Activated naive CD8-positive, alpha-beta T cell treated with anti-CD3 and anti-CD28 coated beads, Interleukin-2, amount 10 ng/mL, durations not matched to agents 7 days and 5 days (primary cell): ENCODE measurements at regions of chr13 and their contacts with region 1.

Region 1: GRCh38 chr13:30395192-30396084 is 26.9 kb upstream of the UBE2L5 start:
- DNase-seq: peak; percentile 58
- ATAC-seq: peak; percentile 68
- H3K4me3 Mint-ChIP-seq: peak overlapping the region; percentile 88
- H3K27ac Mint-ChIP-seq: peak overlapping the region; percentile 99
- H3K4me1 Mint-ChIP-seq: peaks cover 29% of the 10 kb centered on the region
- H3K27me3 Mint-ChIP-seq: no peaks in the 10 kb centered on the region

Region 2: DNA sequence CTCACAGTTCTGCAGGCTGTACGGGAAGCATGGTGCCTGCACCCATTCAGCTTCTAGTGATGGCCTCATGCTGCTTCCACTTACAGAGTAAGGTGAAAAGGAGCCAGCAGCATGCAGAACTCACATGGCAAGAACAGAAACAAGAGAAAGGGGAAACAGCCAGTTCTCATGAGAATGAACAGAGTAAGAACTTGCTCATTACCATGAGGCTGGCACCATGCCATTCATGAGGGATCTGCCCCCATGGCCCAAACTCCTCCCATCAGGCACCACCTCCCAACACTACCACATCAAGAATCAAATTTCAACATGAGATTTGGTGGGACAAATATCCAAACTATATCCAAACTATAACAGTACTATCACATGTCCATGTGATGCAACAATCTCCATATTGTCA is 160.2 kb before region 1 on chr13:
- POLR2A ChIA-PET with region 1: no interaction called
- DNase-seq: no peak
- ATAC-seq: no peak
- H3K4me3 Mint-ChIP-seq: no peak overlapping the region
- H3K27ac Mint-ChIP-seq: no peak overlapping the region
- H3K4me1 Mint-ChIP-seq: no peaks in the 10 kb centered on the region
- H3K27me3 Mint-ChIP-seq: no peaks in the 10 kb centered on the region

Region 3: GRCh38 chr13:30422054-30422839 is 26.8 kb after region 1 on chr13 and contains the start of gene UBE2L5:
- POLR2A ChIA-PET with region 1: interaction called, 10 read pairs
- DNase-seq: peak; percentile 89
- ATAC-seq: peak; percentile 91
- H3K4me3 Mint-ChIP-seq: peak within 1 kb of the TSS; percentile 75
- H3K27ac Mint-ChIP-seq: peak within 1 kb of the TSS; percentile 32
- H3K4me1 Mint-ChIP-seq: peaks cover 10% of the 10 kb centered on the region
- H3K27me3 Mint-ChIP-seq: no peaks in the 10 kb centered on the region
- total RNA-seq, gene UBE2L5: not detected